ENCODE measurements at regions of chr10 and their contacts with region 1.

Region 1: GRCh38 chr10:117167789-117168674 is 29.3 kb upstream of the KCNK18 start:
- DNase-seq: peak; percentile 55
- H3K4me3 Mint-ChIP-seq: no peak overlapping the region
- H3K27ac Mint-ChIP-seq: no peak overlapping the region
- H3K4me1 Mint-ChIP-seq: no peaks in the 10 kb centered on the region
- H3K27me3 Mint-ChIP-seq: peaks cover 78% of the 10 kb centered on the region

Region 2: DNA sequence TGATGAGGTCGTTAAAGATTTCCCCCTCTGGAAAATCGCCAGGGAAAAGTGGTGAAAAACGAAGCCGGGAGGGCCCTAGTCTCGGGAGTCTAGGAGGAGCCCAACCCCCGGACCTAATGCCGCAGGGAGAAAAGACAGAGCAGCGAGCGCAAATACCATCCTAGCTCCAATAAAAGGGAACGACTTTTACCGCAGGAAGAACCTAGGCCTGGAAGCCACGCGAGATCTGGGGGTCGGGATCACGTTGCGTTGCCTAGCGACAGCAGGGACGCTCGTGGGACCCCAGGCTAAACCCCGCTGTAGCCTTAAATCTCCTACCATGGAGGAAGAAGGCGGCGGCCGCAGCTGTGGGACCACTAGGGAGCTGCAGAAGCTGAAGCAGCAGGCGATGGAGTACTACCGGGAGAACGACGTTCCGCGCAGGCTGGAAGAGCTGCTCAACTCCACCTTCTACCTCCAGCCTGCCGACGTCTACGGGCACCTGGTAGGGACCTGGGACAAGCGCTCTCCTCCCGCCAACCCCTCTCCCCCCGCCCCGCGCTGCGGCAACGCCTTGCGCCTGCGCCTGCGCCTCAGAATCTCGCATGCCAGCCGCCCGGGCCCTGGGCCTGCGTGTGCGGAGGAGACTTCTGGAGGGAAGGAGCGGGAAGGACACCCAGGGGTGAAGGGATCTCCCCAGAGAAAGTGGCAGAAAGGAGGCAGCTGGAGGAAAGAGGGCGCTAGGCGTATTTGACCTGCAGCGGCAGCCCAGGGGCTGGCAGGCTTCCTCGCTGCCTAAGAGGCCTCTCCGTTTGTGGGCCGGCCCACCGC is 318.6 kb before region 1 on chr10 and contains the start of gene ENO4:
- intact Hi-C with region 1: loop called (anchors 2 kb)
- DNase-seq: no peak
- H3K4me3 Mint-ChIP-seq: no peak within 1 kb of the TSS
- H3K27ac Mint-ChIP-seq: no peak within 1 kb of the TSS
- H3K4me1 Mint-ChIP-seq: no peaks in the 10 kb centered on the region
- H3K27me3 Mint-ChIP-seq: peaks cover 51% of the 10 kb centered on the region
- total RNA-seq, gene ENO4: not detected in 2 replicates

Region 3: GRCh38 chr10:117131376-117132327 is 36.4 kb before region 1 on chr10:
- intact Hi-C with region 1: loop called (anchors 1 kb)
- DNase-seq: no peak
- H3K4me3 Mint-ChIP-seq: no peak overlapping the region
- H3K27ac Mint-ChIP-seq: no peak overlapping the region
- H3K4me1 Mint-ChIP-seq: peaks cover 2% of the 10 kb centered on the region
- H3K27me3 Mint-ChIP-seq: peaks cover 66% of the 10 kb centered on the region

Region 4: GRCh38 chr10:117736684-117737083 is 568.7 kb after region 1 on chr10:
- intact Hi-C with region 1: loop called (anchors 10 kb)
- DNase-seq: no peak
- H3K4me3 Mint-ChIP-seq: no peak overlapping the region
- H3K27ac Mint-ChIP-seq: no peak overlapping the region
- H3K4me1 Mint-ChIP-seq: no peaks in the 10 kb centered on the region
- H3K27me3 Mint-ChIP-seq: peaks cover 48% of the 10 kb centered on the region

Region 5: GRCh38 chr10:118241229-118242137 is 1073.5 kb after region 1 on chr10:
- intact Hi-C with region 1: loop called (anchors 10 kb)
- DNase-seq: peak; percentile 43
- H3K4me3 Mint-ChIP-seq: no peak overlapping the region
- H3K27ac Mint-ChIP-seq: no peak overlapping the region
- H3K4me1 Mint-ChIP-seq: no peaks in the 10 kb centered on the region
- H3K27me3 Mint-ChIP-seq: peaks cover 26% of the 10 kb centered on the region

Measured in activated T-helper 2 cell treated with anti-CD3 and anti-CD28 coated beads, Interferon-gamma antibody, Interleukin-2, Interleukin-4, amounts not matched to agents 10 μg/mL and 5 μg/mL and 100 μg/mL, durations not matched to agents 14 hours and 24 hours and 36 hours (primary cell).